Right ventricle myocardium inferior (tissue), 1 donor: ENCODE measurements at regions of chr4 and their contacts with region 1.

Region 1: GRCh38 chr4:168408620-168409019 is 71.7 kb downstream of the DDX60L start:
- DNase-seq: no peak
- ATAC-seq: peak; percentile 95

Region 2: DNA sequence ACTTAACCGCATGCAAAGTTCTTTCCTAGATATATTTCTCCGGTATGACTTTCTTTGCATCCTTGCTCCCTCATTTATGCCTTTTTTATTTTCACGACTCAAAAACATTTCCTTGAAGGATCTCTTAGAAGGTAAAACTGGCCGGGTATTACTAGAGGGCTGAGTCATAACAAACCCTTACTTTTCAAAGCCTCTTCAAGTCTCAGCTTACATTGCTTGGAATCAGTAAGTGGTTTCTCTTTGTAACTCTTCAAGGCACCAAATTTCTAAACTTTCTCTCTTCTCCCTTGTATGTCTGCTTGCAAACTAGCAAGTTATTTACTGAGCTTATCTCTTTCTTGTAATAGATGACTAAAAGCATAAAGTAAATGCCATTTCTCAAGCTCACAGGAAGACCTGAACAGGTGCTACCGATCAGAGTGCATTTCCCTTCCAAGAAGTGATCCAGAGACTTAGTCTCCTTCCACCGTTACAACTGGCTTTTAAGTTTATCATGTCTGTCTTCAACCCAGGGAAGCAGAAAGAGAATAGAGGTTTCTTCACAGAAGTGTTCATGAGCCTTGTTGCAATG is 240.8 kb before region 1 on chr4:
- intact Hi-C with region 1: no loop called
- DNase-seq: no peak
- ATAC-seq: no peak

Region 3: GRCh38 chr4:168183717-168184608 is 224.7 kb before region 1 on chr4:
- intact Hi-C with region 1: loop called (anchors 10 kb)
- DNase-seq: no peak
- ATAC-seq: peak; percentile 59

Region 4: DNA sequence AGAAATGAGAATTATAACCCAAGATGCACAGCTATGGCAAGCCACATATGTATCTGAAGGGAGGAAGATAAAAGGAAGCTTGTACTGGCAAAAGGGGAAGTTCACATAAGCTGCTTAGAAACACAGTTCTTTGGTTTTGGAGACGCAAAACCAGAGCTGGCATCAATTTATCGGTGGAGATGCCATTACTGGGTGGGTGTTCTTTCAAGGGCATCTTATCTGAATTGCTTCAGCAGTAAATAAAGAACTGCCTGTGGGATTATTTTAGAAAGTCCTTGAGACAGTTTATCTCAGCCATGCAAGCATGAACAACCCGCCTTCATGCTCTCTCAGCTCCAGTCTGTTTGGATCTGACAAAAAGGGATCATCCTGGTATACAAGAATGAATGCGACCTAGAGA is 150.9 kb before region 1 on chr4:
- intact Hi-C with region 1: loop called (anchors 10 kb)
- DNase-seq: no peak
- ATAC-seq: peak; percentile 74

Region 5: DNA sequence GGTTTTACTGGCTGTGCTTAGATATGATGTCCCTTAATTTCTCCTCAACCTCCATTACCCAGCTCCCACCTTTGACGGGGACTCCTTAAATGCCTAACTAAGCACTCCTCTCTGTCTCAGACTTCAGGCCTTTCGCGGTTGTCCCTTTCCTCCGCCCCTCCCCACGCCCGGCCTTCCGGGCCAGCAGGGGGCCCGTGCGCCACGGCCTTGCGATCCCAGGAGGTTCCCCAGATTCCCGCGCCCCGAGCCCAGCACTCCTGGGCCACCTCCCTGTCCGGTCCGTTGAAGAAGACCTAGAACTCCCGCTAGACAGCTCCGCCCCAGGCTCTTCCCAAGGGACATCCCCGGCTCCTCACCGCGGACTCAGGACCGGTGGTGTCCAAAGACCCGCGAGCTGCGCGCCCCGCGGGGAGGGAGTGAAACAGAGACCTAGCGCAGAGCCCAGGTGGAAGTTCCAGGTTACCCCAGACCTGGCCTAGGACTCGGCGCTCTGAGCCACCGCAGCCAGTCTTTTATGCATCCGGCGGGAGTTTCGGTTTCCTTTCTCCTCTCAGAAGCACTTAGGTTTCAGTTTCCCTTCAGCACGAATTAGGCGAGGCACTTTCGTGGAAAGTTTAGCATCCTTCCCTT is 90.2 kb before region 1 on chr4 and contains the start of gene DDX60:
- intact Hi-C with region 1: loop called (anchors 5 kb)
- DNase-seq: peak; percentile 84
- ATAC-seq: peak; percentile 93
- total RNA-seq, gene DDX60: 7.7 TPM

Region 6: GRCh38 chr4:168475745-168476144 is 67.1 kb after region 1 on chr4:
- intact Hi-C with region 1: loop called (anchors 5 kb)
- DNase-seq: no peak
- ATAC-seq: no peak

Region 7: GRCh38 chr4:168496834-168497233 is 88.2 kb after region 1 on chr4 and contains the start of gene PALLD:
- intact Hi-C with region 1: loop called (anchors 5 kb)
- DNase-seq: no peak
- ATAC-seq: peak; percentile 94
- total RNA-seq, gene PALLD: 977 TPM

Region 8: DNA sequence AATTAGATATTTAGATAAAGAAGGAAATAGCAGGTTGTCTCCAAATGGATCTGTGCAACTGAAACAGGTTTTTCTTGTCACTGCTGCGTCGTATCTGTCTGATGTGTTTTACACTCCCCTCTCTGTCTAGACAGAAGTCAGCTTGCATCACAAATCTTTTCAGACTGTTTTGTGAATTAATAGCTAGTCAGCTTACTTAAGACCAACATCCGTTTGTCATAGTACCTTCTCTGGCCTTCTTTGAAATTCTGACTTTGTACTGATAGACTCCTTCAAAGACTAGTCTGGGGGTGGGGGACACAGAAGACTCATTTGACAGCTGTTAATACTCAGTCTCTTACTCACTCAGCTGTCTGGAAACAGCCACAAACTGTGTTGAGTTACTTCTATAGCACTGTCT is 286.0 kb after region 1 on chr4:
- intact Hi-C with region 1: loop called (anchors 10 kb)
- DNase-seq: no peak
- ATAC-seq: no peak